Activated CD4-positive, alpha-beta T cell treated with anti-CD3 and anti-CD28 coated beads for 36 hours (primary cell): ENCODE measurements at regions of chr11 and their contacts with region 1.

Region 1: GRCh38 chr11:46700241-46701077 is at the starts of genes ARHGAP1 and ZNF408:
- DNase-seq: peak; percentile 100
- ATAC-seq: peak; percentile 95
- H3K4me3 Mint-ChIP-seq: peak within 1 kb of the TSS; percentile 82
- H3K27ac Mint-ChIP-seq: peak within 1 kb of the TSS; percentile 96
- H3K4me1 Mint-ChIP-seq: peaks cover 42% of the 10 kb centered on the region
- H3K27me3 Mint-ChIP-seq: no peaks in the 10 kb centered on the region
- total RNA-seq, gene ARHGAP1: 40.2 to 50.0 TPM
- total RNA-seq, gene ZNF408: 8.8 to 9.0 TPM

Region 2: DNA sequence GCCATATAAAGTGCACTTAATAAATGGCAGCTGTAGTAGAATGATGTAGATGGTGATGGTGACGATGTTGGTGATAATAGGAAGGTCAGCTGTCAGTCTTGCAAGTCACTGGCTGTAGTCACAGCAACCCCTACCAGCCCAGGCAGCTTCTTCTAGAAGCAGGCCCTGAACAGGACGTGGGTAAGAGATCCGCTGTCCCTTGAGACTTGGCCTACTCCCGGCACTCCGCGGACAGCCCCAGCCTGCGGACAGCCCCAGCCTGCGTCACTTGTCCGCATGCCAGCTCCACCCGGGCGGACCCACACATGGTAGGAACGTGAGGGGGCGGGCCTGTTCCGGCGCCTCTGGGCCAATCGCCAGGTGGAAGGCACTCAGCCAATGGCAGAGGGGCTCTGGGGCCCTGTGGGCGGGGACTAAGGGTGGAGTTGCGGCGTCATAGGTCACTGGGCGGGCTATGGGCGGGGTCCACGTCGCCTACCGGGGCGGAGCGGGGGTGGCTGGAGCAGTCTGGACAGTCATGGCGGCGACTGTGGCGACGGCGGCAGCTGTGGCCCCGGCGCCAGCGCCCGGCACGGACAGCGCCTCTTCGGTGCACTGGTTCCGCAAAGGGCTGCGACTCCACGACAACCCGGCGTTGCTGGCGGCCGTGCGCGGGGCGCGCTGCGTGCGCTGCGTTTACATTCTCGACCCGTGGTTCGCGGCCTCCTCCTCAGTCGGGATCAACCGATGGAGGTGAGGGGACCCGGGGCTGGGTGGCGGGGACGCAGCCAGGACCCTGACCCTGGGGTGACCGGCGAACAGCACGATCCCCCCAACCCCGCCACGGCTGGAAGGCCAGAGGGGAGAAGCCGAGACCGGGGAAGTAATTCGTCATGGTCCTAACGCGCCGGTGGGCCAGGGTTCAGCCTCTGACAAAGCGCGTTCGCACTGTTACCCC is 853.2 kb before region 1 on chr11 and contains the start of gene CRY2:
- CTCF ChIA-PET with region 1: no interaction called
- POLR2A ChIA-PET with region 1: no interaction called
- intact Hi-C with region 1: loop called in 1 of 2 experiments (anchors 1 kb)
- DNase-seq: peak; percentile 99
- ATAC-seq: peak; percentile 90
- H3K4me3 Mint-ChIP-seq: peak within 1 kb of the TSS; percentile 74
- H3K27ac Mint-ChIP-seq: peak within 1 kb of the TSS; percentile 58
- H3K4me1 Mint-ChIP-seq: peaks cover 53% of the 10 kb centered on the region
- H3K27me3 Mint-ChIP-seq: no peaks in the 10 kb centered on the region
- total RNA-seq, gene CRY2: 13.1 to 14.1 TPM

Region 3: GRCh38 chr11:46352063-46352841 is 348.2 kb before region 1 on chr11:
- CTCF ChIA-PET with region 1: interaction called, 4 read pairs
- POLR2A ChIA-PET with region 1: no interaction called
- intact Hi-C with region 1: loop called in 1 of 2 experiments (anchors 1 kb)
- DNase-seq: peak; percentile 88
- ATAC-seq: peak; percentile 39
- H3K4me3 Mint-ChIP-seq: peak overlapping the region; percentile 76
- H3K27ac Mint-ChIP-seq: peak overlapping the region; percentile 94
- H3K4me1 Mint-ChIP-seq: peaks cover 82% of the 10 kb centered on the region
- H3K27me3 Mint-ChIP-seq: no peaks in the 10 kb centered on the region

Region 4: DNA sequence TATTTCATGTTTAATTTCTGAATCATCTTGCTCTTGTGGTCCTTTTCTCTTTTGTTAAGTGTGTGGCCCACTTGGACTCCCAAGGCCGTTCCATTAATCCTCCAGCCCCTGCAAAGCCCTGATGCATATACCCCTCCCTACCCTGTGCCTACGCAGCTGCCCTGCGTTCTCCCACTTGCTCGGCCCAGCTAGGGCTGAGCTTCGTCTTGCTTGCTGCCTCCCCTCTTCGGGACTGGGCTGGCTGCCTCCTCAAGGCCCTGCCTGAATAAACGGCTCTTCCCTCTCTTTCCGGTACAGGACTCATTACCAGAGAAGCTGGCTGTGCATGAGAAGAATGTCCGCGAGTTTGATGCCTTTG is 28.5 kb before region 1 on chr11:
- CTCF ChIA-PET with region 1: interaction called, 6 read pairs
- POLR2A ChIA-PET with region 1: interaction called, 3 read pairs
- intact Hi-C with region 1: loop called in 1 of 2 experiments (anchors 1 kb)
- DNase-seq: no peak
- ATAC-seq: no peak
- H3K4me3 Mint-ChIP-seq: no peak overlapping the region
- H3K27ac Mint-ChIP-seq: peak overlapping the region; percentile 92
- H3K4me1 Mint-ChIP-seq: peaks cover 67% of the 10 kb centered on the region
- H3K27me3 Mint-ChIP-seq: no peaks in the 10 kb centered on the region

Region 5: DNA sequence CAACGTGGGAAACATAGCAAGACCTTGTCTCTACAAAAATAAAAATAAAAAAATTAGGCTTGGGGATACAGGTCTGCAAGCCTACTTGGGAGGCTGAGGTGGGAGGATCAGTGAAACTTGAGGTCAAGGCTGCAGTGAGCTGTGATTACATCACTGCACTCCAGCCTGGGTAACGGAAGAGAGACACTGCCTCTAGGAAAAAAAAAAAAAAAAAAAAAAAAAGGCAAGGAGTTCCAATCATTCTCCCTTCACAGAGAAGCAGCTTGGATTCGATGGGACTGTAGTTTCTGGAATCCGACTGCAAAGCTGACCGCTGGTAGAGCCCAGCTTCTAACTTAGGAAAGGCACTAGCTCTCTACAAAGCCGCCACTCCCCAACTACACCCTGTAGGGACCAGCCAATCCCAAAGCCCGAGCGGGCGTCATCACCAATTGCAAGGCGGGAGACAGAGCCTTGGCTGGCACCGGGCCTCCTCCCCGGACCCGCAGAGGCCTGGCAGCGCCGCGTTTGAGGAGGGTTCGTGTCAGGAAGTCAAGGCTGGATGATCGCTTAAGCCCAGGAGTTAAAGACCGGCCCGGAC is 513.6 kb after region 1 on chr11:
- CTCF ChIA-PET with region 1: no interaction called
- POLR2A ChIA-PET with region 1: interaction called, 3 read pairs
- intact Hi-C with region 1: loop called in 1 of 2 experiments (anchors 1 kb)
- DNase-seq: peak; percentile 94
- ATAC-seq: peak; percentile 80
- H3K4me3 Mint-ChIP-seq: peak overlapping the region; percentile 99
- H3K27ac Mint-ChIP-seq: peak overlapping the region; percentile 100
- H3K4me1 Mint-ChIP-seq: peaks cover 31% of the 10 kb centered on the region
- H3K27me3 Mint-ChIP-seq: no peaks in the 10 kb centered on the region

Region 6: DNA sequence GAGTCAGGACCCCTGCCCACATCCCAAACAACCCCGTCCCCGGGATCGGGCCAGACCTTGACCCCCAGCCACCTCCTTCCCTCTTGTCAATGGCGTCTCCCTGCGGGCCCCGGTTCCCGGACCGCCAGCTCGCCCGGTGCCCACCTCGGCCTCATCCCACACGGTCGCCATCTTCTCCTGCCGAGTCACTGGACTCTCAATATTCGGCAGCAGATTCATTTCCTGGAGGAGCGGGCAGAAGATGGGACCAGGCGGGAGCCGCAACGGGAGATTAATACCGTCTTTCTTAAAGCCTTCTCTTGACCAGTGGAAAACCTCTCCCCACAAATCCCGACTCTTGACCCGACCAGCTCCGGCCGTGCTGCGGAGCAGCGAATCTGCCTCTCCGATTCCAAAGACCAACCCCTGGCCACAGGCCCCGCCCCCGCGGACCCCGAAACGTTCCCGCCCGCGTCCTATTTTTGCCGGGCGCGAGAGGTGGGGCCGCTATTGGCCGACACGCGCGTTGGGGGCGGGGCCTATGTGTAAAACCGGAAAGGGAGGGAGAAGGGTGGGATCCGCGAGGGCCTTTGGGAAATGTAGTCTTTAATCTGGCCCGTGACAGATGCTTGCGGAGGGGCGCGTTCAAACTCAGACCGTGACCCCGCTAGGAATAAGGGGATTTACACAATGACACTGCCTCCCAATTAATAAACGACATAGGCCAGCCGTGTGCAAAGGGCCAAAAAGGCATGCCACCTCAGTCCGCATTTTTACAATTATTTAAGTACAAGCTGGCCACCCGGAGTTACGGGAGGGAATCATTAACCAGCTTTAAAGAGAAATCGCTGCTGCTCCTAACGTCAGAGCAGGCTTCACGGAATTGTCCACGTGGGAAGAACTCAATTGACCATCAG is 725.9 kb after region 1 on chr11 and contains the start of gene PSMC3:
- CTCF ChIA-PET with region 1: no interaction called
- POLR2A ChIA-PET with region 1: no interaction called
- intact Hi-C with region 1: loop called in 1 of 2 experiments (anchors 1 kb)
- DNase-seq: peak; percentile 100
- ATAC-seq: peak; percentile 98
- H3K4me3 Mint-ChIP-seq: peak within 1 kb of the TSS; percentile 100
- H3K27ac Mint-ChIP-seq: peak within 1 kb of the TSS; percentile 100
- H3K4me1 Mint-ChIP-seq: peaks cover 24% of the 10 kb centered on the region
- H3K27me3 Mint-ChIP-seq: no peaks in the 10 kb centered on the region
- total RNA-seq, gene PSMC3: 147 to 167 TPM

Region 7: DNA sequence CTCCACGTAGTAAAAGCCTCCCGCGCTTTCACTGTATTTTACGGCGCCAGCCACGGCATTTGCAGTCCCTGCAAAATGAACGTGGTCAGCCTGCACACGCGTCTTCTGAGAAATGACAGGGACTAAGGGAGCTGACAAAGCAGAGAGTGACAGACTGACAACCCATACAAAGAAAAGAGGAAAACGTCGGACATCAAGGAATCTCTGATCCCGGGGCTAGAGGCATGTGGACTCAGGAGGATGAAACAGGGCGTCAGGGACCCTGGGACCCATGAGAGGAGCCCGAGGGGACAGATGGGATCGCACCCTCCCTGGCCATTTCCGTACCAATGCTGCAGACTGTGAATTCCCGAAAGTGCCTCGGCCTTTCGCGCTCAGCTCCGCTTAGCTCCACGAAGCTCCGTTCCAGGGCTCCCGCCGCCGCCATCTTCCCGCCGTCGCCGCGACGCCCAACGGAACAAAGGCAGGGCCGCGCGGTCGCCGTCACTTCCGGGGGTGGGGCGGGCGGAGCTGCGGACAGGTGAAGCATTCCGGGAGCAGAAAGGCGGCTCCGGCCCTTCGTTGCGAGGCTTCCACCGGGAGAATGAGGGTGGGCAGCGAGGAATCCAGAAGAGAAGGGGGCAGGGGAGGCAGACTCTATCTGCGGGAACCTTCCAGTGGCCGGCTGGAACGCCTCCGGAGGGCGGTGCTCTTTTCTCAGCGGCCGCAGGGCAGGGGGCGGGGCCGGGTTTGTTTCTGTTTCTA is 1147.6 kb after region 1 on chr11 and contains the start of gene NUP160:
- CTCF ChIA-PET with region 1: no interaction called
- POLR2A ChIA-PET with region 1: no interaction called
- intact Hi-C with region 1: loop called in 1 of 2 experiments (anchors 1 kb)
- DNase-seq: peak; percentile 94
- ATAC-seq: peak; percentile 88
- H3K4me3 Mint-ChIP-seq: peak within 1 kb of the TSS; percentile 90
- H3K27ac Mint-ChIP-seq: peak within 1 kb of the TSS; percentile 99
- H3K4me1 Mint-ChIP-seq: peaks cover 44% of the 10 kb centered on the region
- H3K27me3 Mint-ChIP-seq: no peaks in the 10 kb centered on the region
- total RNA-seq, gene NUP160: 67.1 to 84.5 TPM